ENCODE measurements at regions of chr2 and their contacts with region 1.

Region 1: GRCh38 chr2:96174251-96175144 is 29.3 kb upstream of the DUSP2 start:
- DNase-seq: peak; percentile 95
- H3K4me3 Mint-ChIP-seq: peak overlapping the region; percentile 43
- H3K27ac Mint-ChIP-seq: peak overlapping the region; percentile 54
- H3K4me1 Mint-ChIP-seq: peaks cover 20% of the 10 kb centered on the region
- H3K27me3 Mint-ChIP-seq: peaks cover 3% of the 10 kb centered on the region

Region 2: DNA sequence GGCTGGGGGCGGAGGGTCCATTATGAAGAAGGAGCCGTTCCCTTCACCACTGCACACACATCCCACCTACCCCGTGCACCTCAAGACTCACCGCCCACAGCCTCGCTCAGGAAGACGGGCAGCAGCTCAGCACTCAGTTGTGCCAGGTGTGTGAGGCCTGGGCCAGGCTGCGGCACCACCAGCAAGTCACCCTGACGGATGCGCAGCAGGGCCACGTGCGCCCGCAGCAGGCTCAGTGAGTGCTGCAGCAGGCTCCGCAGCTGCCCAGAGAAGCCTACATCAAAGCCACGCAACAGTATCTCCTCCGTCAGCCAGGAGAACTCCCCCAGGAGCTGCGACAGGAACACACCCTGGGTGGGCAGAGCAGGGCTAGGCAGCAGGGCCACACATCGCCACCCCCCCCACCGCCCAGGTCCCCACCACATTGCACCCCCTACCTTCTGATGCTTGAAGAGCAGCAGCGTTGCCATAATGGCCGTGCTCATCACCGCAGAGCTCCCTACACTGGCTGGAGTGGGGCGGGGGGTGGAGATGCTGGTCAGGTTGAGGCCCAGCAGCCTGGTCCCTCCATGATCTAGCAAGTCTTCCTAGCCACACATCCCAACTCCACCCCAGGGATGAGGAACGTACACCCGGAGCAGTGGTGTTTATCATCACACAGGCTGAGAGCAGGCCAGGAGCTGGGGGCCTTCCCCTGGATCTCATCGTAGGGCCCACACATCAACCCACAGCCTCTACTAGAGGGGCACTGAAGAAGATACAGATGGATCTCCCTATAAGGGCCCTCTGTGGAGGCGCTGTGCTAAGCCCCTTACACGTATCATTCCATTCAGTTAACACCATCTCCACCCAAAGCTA is 149.9 kb before region 1 on chr2:
- intact Hi-C with region 1: loop called (anchors 10 kb)
- DNase-seq: peak; percentile 44
- H3K4me3 Mint-ChIP-seq: no peak overlapping the region
- H3K27ac Mint-ChIP-seq: no peak overlapping the region
- H3K4me1 Mint-ChIP-seq: peaks cover 3% of the 10 kb centered on the region
- H3K27me3 Mint-ChIP-seq: no peaks in the 10 kb centered on the region

Region 3: GRCh38 chr2:96138179-96139145 is 36.0 kb before region 1 on chr2 and contains the start of gene ASTL:
- intact Hi-C with region 1: loop called (anchors 1 kb)
- DNase-seq: peak; percentile 88
- H3K4me3 Mint-ChIP-seq: no peak within 1 kb of the TSS
- H3K27ac Mint-ChIP-seq: no peak within 1 kb of the TSS
- H3K4me1 Mint-ChIP-seq: peaks cover 24% of the 10 kb centered on the region
- H3K27me3 Mint-ChIP-seq: no peaks in the 10 kb centered on the region
- total RNA-seq, gene ASTL: 2.4 and 3.4 TPM in 2 replicates

Region 4: GRCh38 chr2:96157651-96158553 is 16.6 kb before region 1 on chr2:
- intact Hi-C with region 1: loop called (anchors 1 kb)
- DNase-seq: peak; percentile 92
- H3K4me3 Mint-ChIP-seq: peak overlapping the region; percentile 70
- H3K27ac Mint-ChIP-seq: peak overlapping the region; percentile 92
- H3K4me1 Mint-ChIP-seq: peaks cover 64% of the 10 kb centered on the region
- H3K27me3 Mint-ChIP-seq: no peaks in the 10 kb centered on the region